Right cardiac atrium (tissue), 5 donors: ENCODE measurements at regions of chrX and their contacts with region 1.

Region 1: GRCh38 chrX:95076449-95076848 is 1402.4 kb downstream of the FAM133A start:
- DNase-seq: no peak
- ATAC-seq: no peak
- H3K4me3 ChIP-seq: no peak overlapping the region
- H3K27ac ChIP-seq: no peak overlapping the region
- H3K4me1 ChIP-seq: no peaks in the 10 kb centered on the region
- H3K27me3 ChIP-seq: no peaks in the 10 kb centered on the region

Region 2: DNA sequence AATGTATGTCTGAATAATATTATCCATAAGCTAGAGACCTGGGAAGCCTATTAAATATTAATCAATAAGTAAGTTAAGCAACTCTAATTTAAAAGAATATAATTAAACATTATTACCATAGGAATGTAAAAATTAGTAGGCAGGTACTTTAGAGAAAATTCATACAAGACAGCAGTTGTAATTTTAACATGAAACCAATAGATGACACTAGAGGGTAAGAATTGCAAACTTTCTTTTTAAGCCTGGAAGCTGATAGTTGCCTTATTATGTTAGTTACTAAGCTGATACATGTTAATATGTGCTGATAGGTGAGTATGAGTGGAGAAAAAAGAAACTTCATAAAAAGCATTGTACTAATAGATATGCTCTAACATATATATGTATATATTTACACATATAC is 245.1 kb before region 1 on chrX:
- intact Hi-C with region 1: loop called in 1 of 4 experiments (anchors 5 kb)
- DNase-seq: no peak
- ATAC-seq: no peak
- H3K4me3 ChIP-seq: no peak overlapping the region
- H3K27ac ChIP-seq: no peak overlapping the region
- H3K4me1 ChIP-seq: no peaks in the 10 kb centered on the region
- H3K27me3 ChIP-seq: no peaks in the 10 kb centered on the region